ENCODE measurements at regions of chr14 and their contacts with region 1.

Region 1: DNA sequence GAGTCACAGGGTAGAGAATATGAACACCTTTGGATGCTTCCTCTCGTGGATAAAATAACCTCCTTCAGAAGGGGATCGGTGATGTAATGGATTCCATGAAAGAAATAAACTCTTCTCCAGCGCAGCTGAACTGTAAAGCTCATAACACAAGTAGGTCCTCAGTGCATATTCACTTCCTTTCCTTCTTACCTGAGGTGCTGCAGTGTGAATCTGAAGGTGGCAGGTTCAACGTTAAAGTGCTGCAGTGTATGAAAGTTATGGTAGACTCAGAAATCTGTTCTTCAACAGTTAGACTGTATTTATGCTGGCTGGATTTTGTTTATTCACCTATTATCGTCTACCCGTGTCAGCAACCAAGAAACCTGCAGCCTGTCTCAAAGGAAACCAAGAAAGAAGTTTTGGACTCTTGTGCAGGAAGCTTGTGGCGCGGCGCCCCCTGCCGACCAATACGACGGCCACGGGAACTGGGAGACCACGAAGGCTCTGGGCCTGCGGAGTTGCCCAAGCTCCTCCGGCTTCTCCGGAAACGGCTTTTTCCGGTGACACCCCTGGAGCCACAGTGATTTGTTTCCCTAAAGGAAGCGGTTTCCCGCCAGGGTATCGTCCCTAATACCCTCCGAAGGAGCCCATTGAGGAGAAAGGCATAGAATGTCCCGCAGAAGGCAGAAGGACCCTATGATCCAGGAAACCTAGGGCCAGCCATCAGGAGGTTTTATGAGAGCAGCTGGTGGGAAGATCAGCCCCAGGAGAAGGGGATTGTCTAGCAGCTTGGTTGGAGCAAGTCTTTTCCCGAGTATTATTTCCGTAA is 17.6 kb upstream of the RNASE3 start:
- DNase-seq: peak; percentile 62
- H3K4me3 Mint-ChIP-seq: no peak overlapping the region
- H3K27ac Mint-ChIP-seq: no peak overlapping the region
- H3K4me1 Mint-ChIP-seq: peaks cover 11% of the 10 kb centered on the region
- H3K27me3 Mint-ChIP-seq: peaks cover 23% of the 10 kb centered on the region

Region 2: GRCh38 chr14:20697273-20698017 is 176.1 kb before region 1 on chr14:
- intact Hi-C with region 1: loop called (anchors 1 kb)
- DNase-seq: peak; percentile 44
- H3K4me3 Mint-ChIP-seq: no peak overlapping the region
- H3K27ac Mint-ChIP-seq: no peak overlapping the region
- H3K4me1 Mint-ChIP-seq: no peaks in the 10 kb centered on the region
- H3K27me3 Mint-ChIP-seq: peaks cover 8% of the 10 kb centered on the region

Region 3: GRCh38 chr14:21039585-21040369 is 166.2 kb after region 1 on chr14:
- intact Hi-C with region 1: no loop called
- DNase-seq: no peak
- H3K4me3 Mint-ChIP-seq: no peak overlapping the region
- H3K27ac Mint-ChIP-seq: no peak overlapping the region
- H3K4me1 Mint-ChIP-seq: no peaks in the 10 kb centered on the region
- H3K27me3 Mint-ChIP-seq: peaks cover 20% of the 10 kb centered on the region

Region 4: DNA sequence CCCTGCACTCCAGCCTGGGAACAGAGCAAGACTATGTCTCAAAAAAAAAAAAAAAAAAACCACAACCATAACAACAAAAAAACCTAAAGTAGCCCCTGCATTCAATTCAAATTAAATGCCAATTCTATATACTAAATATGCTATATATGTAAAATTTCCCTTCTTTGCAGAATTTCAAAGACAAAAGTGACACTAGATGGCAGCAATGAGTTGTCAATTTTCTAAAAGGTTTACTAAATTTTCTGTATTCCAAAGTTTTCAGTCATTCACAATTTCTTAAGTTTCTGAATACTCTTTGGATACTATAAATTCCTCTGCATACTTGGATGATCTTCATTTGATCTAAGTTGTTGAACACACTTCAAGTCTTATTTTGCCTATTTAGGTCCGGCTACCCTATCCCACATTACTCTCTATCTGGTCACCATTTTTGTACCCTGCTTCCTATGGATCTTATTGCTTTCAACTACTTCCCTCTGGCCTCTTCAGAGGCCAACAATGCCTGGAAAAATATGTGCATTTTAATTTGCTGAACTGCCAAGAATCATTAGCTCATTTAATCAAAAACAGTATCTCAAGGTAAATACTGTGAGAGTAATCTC is 367.7 kb after region 1 on chr14:
- intact Hi-C with region 1: no loop called
- DNase-seq: no peak
- H3K4me3 Mint-ChIP-seq: no peak overlapping the region
- H3K27ac Mint-ChIP-seq: no peak overlapping the region
- H3K4me1 Mint-ChIP-seq: peaks cover 52% of the 10 kb centered on the region
- H3K27me3 Mint-ChIP-seq: no peaks in the 10 kb centered on the region